Common myeloid progenitor, CD34-positive (primary cell): ENCODE measurements at regions of chr19 and their contacts with region 1.

Region 1: DNA sequence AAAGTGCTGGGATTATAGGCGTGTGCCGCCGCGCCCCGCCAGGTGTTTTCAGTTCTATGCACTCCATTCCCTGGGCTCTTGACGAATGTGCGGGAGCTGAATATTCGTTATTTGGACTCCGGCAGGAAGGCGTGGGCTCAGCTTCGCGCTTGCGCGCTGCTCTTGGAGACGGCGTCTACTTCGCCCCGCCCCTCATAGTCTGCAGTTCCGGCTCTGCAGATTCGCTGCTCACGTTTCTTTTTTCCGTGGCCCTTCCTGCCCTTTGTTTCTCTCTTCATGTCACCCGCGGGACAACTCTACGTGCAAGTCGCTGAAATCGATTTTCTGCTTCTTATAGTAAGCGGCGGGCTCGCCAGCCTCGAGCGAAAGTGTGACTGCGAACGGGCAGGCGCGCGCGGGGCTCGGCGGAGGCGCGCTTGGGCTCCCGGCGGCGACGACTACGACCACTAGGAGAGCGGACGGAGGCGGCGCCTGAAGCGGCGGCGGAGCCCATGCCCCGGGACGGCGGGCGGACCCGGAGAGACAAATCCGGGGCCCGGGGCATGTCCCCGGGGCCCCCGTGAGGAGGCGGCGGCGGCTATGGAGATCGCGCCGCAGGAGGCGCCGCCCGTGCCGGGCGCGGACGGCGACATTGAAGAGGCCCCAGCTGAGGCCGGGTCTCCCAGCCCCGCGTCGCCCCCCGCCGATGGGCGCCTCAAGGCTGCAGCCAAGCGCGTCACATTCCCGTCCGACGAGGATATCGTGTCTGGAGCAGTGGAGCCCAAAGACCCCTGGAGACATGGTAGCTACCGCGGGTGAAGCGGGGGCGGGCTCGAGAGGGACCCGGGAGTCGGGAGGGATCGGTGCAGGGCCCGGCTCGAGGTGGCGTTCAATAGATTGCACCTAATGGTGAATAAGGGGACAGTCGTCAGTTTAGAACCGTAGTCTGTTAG is at the start of gene PPP1R37:
- DNase-seq: peak; percentile 98 to 99 (median 98)
- H3K4me3 ChIP-seq: peak within 1 kb of the TSS; percentile 84 to 97 (median 94)
- H3K27ac ChIP-seq: peak within 1 kb of the TSS; percentile 99
- H3K4me1 ChIP-seq: peaks cover 6 to 40% (median 30%) of the 10 kb centered on the region in 4 experiments
- H3K27me3 ChIP-seq: no peaks in the 10 kb centered on the region

Region 2: GRCh38 chr19:44883922-44884321 is 209.1 kb before region 1 on chr19:
- CTCF ChIA-PET with region 1: no interaction called
- POLR2A ChIA-PET with region 1: no interaction called
- DNase-seq: no peak
- H3K4me3 ChIP-seq: no peak overlapping the region
- H3K27ac ChIP-seq: no peak overlapping the region
- H3K4me1 ChIP-seq: no peaks in the 10 kb centered on the region
- H3K27me3 ChIP-seq: no peaks in the 10 kb centered on the region

Region 3: GRCh38 chr19:45103156-45103507 is 10.1 kb after region 1 on chr19:
- CTCF ChIA-PET with region 1: interaction called, 13 read pairs
- POLR2A ChIA-PET with region 1: no interaction called
- DNase-seq: peak in 2 of 3 donors; percentile 30 to 72
- H3K4me3 ChIP-seq: peak overlapping the region in 4 of 7 experiments; percentile 20 to 52 (median 32)
- H3K27ac ChIP-seq: no peak overlapping the region
- H3K4me1 ChIP-seq: peaks cover 0 to 38% (median 29%) of the 10 kb centered on the region in 4 experiments
- H3K27me3 ChIP-seq: no peaks in the 10 kb centered on the region

Region 4: GRCh38 chr19:45117669-45118068 is 24.7 kb after region 1 on chr19:
- CTCF ChIA-PET with region 1: interaction called, 17 read pairs
- POLR2A ChIA-PET with region 1: no interaction called
- DNase-seq: no peak
- H3K4me3 ChIP-seq: peak overlapping the region in 3 of 7 experiments; percentile 33 to 42 (median 40)
- H3K27ac ChIP-seq: no peak overlapping the region
- H3K4me1 ChIP-seq: peaks cover 5 to 87% (median 75%) of the 10 kb centered on the region in 4 experiments
- H3K27me3 ChIP-seq: no peaks in the 10 kb centered on the region

Region 5: DNA sequence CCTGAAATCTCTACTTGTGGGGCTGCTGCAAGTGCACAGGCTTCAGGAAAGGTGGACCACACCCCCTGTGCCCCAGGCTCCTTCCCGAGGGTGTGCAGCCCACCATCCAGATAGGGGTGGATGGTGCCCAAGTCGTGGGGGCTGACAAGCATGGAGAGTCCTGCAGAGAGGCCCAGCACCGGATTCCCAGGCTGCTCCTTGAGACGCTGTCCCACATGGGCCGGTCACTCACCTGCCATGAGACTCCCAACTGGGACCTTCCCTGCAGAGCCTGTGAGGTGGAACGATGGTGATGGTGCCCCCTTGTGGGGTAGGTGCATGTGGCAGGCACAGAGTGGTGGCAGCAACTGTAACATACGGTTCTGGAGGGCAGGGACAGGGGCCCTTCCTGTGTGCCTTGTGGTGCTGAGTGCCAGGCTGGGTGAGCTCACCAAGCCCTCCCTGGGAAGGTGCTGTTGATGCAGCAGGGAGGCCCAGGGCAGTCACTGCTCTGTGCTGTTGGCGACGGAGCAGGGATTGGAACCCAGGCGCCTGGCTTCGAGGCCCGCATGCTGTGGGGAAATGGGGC is 33.0 kb after region 1 on chr19:
- CTCF ChIA-PET with region 1: interaction called, 25 read pairs
- POLR2A ChIA-PET with region 1: no interaction called
- DNase-seq: peak; percentile 59 to 79 (median 72)
- H3K4me3 ChIP-seq: no peak overlapping the region
- H3K27ac ChIP-seq: no peak overlapping the region
- H3K4me1 ChIP-seq: peaks cover 0 to 25% (median 22%) of the 10 kb centered on the region in 4 experiments
- H3K27me3 ChIP-seq: no peaks in the 10 kb centered on the region